AG04450 (cell line): ENCODE measurements at regions of chr18 and their contacts with region 1.

Region 1: DNA sequence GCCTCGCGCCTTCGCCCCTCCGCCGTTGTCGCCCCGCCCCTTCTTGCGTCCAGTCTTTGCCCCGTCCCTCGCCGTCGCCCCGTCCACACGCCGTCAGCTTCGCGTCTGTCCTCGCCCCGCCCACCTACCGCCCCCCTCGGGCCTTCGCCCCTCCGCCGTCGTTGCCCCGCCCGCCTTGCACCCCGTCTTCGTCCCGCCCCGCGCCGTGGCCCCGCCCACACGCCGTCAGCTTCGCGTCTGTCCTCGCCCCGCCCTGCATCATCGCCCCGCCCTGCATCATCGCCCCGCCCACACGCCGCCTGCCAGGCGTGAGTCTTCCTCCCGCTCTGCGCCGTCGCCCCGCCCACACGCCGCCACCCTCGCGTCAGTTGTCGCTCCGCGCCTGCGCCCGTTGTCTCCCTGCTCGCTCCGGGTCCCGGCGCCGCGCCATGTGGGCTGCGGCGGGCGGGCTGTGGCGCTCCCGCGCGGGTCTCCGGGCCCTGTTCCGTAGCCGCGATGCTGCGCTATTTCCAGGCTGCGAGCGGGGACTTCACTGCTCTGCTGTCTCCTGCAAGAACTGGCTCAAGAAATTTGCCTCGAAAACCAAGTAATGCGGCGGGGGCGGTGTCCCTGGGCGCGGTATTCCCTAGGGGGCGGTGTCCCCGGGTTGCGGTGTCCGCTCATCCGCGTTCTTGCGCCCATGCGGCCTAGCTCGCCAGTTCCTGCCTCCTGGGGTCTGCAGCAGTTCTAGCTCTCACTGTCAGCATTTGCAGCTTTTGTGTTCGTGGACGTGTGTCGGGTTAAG is at the start of gene RBFA:
- DNase-seq: peak; percentile 98
- H3K4me3 ChIP-seq: peak within 1 kb of the TSS; percentile 81
- H3K27ac ChIP-seq: peak within 1 kb of the TSS; percentile 89
- H3K27me3 ChIP-seq: no peaks in the 10 kb centered on the region
- CTCF ChIP-seq: peak; percentile 53
- polyA plus RNA-seq, gene RBFA: 32.6 and 32.8 TPM in 2 replicates

Region 2: DNA sequence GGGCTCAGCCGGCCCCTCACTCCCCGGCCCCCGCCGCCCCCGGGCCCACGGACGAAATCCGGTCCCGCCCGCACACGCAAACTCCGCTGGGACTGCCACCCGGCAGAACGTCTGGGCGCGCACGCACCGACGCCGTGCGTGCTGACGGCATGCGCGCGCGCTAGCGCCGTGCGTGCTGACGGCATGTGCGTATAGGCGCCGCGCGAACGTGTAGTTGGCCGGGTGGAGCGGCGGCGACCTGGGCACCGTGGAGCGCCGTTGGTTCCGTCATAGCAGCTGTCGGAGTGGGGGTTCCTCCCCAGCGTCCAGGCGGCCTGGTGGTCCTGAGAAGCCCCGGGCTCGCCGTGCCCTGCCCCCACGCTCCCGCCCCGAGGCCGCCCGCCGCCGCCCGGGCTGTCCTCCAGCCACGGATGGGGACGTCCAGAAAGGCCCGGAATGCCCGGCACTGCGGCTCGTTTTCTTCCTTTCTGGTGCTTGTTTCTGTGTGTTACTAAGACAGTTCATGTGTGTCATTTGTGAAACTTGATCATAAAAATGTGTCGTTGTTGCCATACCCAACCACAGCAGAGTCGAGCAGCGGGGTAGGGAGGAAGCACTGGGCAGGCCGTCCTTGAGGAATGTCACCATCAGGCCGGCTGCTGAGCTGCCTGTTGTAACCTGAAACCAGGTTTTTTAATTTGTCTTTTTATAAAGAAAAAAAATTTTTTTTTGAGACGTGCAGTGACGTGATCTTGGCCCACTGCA is 45.6 kb before region 1 on chr18 and contains the start of gene TXNL4A:
- CTCF ChIA-PET with region 1: no interaction called
- POLR2A ChIA-PET with region 1: interaction called, 21 read pairs
- DNase-seq: peak; percentile 47
- H3K4me3 ChIP-seq: peak within 1 kb of the TSS; percentile 99
- H3K27ac ChIP-seq: peak within 1 kb of the TSS; percentile 77
- H3K27me3 ChIP-seq: no peaks in the 10 kb centered on the region
- CTCF ChIP-seq: no peak
- polyA plus RNA-seq, gene TXNL4A: 114 and 131 TPM in 2 replicates

Region 3: DNA sequence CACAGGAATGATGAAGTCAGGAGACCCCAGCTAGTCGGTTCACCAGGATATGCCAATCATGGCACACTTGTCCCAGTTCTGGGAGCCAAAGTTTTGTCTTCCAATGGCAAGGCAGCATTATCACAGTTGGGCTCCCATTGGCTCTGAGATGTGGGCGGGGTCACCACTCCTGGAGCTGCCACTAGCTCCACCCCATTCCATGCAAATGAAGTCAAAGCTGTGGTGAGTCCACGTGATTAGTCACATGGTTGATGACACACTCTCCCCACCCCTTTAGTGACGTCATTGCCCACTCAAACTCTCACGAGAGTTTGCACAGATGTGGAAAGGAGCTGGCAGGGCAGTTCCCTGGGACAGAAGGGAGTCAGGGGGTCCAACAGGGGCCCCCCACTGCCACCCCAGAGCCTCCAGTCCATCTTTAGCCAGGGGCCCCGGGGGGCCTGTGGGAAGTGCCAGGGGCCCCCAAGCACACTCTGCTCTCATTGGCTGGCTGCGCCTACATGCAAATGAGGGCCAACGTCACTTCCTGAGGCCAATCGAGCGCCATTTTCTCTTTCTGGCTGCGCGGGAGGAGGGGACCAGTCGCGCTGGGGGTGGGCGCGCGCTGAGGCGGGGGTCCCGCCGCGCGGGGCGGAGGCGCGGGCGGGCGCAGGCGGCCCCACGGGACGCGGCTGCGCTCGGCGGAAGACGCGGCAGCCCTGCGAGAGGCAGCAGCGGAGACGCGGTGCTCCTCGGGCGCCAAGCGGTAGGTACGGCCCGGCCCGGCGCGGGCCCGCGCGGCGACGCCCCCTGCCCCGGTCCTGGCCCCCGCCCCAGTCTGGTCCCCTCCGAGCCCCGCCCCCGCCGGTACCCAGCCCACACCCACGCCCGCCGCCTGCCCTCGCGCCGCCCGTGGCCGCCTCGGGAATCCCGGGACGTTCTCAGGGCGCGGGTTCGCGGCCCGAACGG is 74.7 kb after region 1 on chr18 and contains the start of gene ADNP2:
- CTCF ChIA-PET with region 1: no interaction called
- POLR2A ChIA-PET with region 1: interaction called, 14 read pairs
- DNase-seq: peak; percentile 88
- H3K4me3 ChIP-seq: peak within 1 kb of the TSS; percentile 75
- H3K27ac ChIP-seq: peak within 1 kb of the TSS; percentile 84
- H3K27me3 ChIP-seq: peaks cover 3% of the 10 kb centered on the region
- CTCF ChIP-seq: no peak
- polyA plus RNA-seq, gene ADNP2: 6.8 and 7.2 TPM in 2 replicates